Caco-2 (cell line): ENCODE measurements at regions of chr2 and their contacts with region 1.

Region 1: DNA sequence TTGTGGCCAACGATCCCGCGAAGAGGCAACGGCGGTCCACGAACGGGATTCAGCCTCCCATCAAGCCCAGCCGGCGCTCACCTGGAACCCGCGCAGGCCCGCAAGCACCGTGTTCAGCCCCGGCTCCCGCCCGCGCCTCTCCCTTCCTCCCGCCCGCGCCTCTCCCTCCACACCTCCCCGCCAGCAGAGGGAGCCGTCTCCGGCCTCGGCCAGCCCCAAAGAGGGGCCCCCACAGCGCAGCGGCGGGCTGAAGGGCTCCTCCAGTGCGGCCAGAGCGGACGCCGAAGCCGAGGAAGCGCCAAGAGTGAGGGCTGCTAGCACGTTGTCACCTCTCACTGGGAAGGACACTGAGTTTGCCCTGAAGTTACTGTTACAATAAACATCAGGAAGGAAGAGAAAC is 55.3 kb upstream of the LAPTM4A start:
- DNase-seq: no peak
- H3K4me3 ChIP-seq: no peak overlapping the region
- H3K4me3 Mint-ChIP-seq: no peak overlapping the region
- H3K27ac Mint-ChIP-seq: no peak overlapping the region
- H3K4me1 ChIP-seq: peaks cover 15% of the 10 kb centered on the region
- H3K4me1 Mint-ChIP-seq: peaks cover 19% of the 10 kb centered on the region
- H3K27me3 ChIP-seq: no peaks in the 10 kb centered on the region
- H3K27me3 Mint-ChIP-seq: no peaks in the 10 kb centered on the region
- CTCF ChIP-seq: peak in 1 of 2 experiments; percentile 23

Region 2: DNA sequence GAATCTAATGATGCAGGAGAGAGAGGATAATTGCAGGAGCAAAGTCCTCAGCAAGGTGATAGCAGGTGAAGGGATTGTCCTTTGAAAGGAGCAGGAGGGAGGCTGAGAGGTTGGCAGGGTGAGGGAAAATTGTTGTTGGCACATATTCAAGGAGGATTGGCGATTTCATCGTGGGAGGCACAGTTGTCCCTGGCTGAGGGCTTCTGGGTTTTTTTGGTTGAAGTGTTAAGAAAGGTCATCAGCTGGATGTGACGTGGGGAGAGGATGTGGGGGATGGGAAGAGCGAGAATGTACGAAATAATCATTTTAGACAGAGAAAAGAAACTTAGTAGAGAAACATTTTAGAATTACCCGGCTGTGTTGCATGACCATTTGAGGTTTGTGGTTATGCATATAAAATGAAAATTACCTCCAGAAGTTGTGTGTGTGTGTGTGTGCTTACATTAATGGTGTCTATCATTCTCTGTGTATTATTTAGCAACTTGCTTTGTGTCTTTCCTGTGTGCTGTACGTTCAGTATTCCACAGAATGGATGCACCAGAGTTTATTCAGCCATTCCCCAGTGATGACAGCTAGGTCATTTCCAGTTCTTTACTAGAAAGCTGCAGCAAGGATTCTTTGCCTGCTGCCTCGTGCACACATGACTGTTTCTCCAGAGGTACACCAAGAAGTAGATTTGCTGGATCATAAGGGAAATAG is 50.6 kb after region 1 on chr2:
- CTCF ChIA-PET with region 1: no interaction called
- POLR2A ChIA-PET with region 1: no interaction called
- intact Hi-C with region 1: no loop called
- DNase-seq: no peak
- H3K4me3 ChIP-seq: no peak overlapping the region
- H3K4me3 Mint-ChIP-seq: no peak overlapping the region
- H3K27ac Mint-ChIP-seq: no peak overlapping the region
- H3K4me1 ChIP-seq: peaks cover 16% of the 10 kb centered on the region
- H3K4me1 Mint-ChIP-seq: peaks cover 10% of the 10 kb centered on the region
- H3K27me3 ChIP-seq: no peaks in the 10 kb centered on the region
- H3K27me3 Mint-ChIP-seq: no peaks in the 10 kb centered on the region
- CTCF ChIP-seq: no peak

Region 3: DNA sequence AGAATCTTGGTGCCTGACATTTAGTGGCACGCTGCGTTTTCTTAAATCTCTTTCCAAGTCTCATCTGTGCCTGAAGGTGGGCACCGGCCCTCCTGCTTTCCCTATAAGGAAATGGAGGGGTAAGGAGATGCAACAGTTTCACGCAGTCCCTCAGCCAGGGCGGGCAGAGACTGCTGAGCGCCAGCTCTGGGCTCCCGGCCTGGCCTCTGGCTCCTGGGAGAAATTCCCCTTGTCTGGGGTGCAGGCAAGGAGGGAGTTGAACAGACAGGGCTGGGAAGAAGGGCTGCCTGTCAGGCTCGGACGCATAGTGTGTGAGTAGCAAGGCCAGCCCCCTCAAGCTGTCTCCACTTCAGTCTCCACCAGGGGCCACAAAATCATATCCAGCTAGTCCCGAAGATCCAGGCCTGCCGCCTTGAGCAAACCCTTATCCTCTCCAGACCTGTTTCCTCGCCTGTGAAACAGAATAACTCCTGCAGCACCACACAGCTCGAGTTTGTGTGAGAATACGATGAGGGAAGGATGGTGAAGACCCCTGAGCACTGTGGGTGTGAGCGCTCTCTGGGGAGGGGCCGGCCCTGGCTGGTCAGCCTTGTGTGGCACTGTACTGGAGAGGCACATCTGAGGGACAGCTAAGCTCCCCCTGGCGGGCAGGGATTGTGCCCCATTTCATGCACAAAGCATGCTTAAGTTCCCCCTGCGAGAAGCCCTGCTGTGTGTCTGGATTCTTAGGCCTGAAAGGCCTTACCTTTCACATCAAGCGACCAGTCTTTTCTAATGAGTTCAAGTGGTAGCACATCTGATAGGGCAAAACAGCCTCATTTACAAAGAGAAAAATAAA is 84.3 kb after region 1 on chr2:
- CTCF ChIA-PET with region 1: interaction called, 3 read pairs
- POLR2A ChIA-PET with region 1: no interaction called
- intact Hi-C with region 1: loop called (anchors 1 kb)
- DNase-seq: peak; percentile 69 to 75
- H3K4me3 ChIP-seq: no peak overlapping the region
- H3K4me3 Mint-ChIP-seq: no peak overlapping the region
- H3K27ac Mint-ChIP-seq: no peak overlapping the region
- H3K4me1 ChIP-seq: peaks cover 21% of the 10 kb centered on the region
- H3K4me1 Mint-ChIP-seq: peaks cover 23% of the 10 kb centered on the region
- H3K27me3 ChIP-seq: no peaks in the 10 kb centered on the region
- H3K27me3 Mint-ChIP-seq: no peaks in the 10 kb centered on the region
- CTCF ChIP-seq: peak; percentile 55 to 76

Region 4: DNA sequence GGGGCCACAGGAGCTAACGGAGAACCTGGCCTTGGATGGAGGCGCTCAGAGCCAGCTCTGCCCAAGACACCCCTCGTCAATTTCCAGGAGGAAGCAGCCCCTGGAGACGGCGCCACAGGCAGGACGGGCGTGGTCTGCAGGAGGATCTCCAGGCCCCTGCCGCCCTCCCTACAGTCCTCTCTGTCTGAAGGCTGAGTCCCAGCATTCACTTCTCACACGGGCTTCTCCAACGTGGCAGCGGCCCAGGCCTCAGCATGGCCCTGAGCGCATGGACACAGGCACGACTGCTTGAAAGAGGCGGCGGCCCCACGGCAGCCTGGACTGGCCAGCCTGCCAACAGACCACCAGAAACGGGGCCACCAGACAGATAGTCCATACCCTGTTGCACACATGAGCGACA is 94.9 kb after region 1 on chr2:
- CTCF ChIA-PET with region 1: no interaction called
- POLR2A ChIA-PET with region 1: no interaction called
- intact Hi-C with region 1: no loop called
- DNase-seq: no peak
- H3K4me3 ChIP-seq: no peak overlapping the region
- H3K4me3 Mint-ChIP-seq: no peak overlapping the region
- H3K27ac Mint-ChIP-seq: no peak overlapping the region
- H3K4me1 ChIP-seq: peaks cover 2% of the 10 kb centered on the region; the same call in 1 of the 2 replicates
- H3K4me1 Mint-ChIP-seq: peaks cover 8% of the 10 kb centered on the region
- H3K27me3 ChIP-seq: no peaks in the 10 kb centered on the region
- H3K27me3 Mint-ChIP-seq: no peaks in the 10 kb centered on the region
- CTCF ChIP-seq: no peak

Region 5: DNA sequence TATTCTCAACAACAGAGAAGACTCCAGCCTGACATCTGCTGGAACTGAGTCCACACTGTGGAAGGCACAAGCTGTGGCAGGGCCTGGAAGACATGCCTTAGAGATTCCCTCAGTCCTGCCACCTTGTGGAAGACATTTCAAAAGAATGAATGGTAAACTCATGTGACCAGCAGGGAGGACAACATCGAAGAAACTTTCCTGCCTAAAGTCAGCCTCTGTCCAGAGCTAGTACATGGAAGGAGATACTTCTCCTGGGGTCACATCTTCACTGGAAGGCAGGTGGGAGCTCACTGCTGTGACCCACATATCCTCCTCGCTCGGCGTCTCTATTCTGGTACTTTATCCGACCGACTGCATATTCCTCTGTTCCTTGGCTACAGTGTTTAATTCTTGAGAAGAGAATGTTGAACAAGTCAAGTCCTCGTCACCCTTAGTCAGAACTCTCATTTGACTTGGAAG is 184.4 kb after region 1 on chr2:
- CTCF ChIA-PET with region 1: interaction called, 13 read pairs
- POLR2A ChIA-PET with region 1: no interaction called
- intact Hi-C with region 1: loop called (anchors 1 kb)
- DNase-seq: peak; percentile 83 to 86
- H3K4me3 ChIP-seq: no peak overlapping the region
- H3K4me3 Mint-ChIP-seq: no peak overlapping the region
- H3K27ac Mint-ChIP-seq: no peak overlapping the region
- H3K4me1 ChIP-seq: peaks cover 11% of the 10 kb centered on the region
- H3K4me1 Mint-ChIP-seq: peaks cover 7% of the 10 kb centered on the region
- H3K27me3 ChIP-seq: no peaks in the 10 kb centered on the region
- H3K27me3 Mint-ChIP-seq: no peaks in the 10 kb centered on the region
- CTCF ChIP-seq: peak; percentile 77 to 80